ENCODE measurements at regions of chr21 and their contacts with region 1.

Region 1: GRCh38 chr21:39518138-39518846 is 66.5 kb downstream of the SH3BGR start:
- DNase-seq: no peak
- H3K4me3 ChIP-seq: no peak overlapping the region
- CTCF ChIP-seq: peak; percentile 72

Region 2: GRCh38 chr21:39349211-39350093 is 168.8 kb before region 1 on chr21:
- CTCF ChIA-PET with region 1: no interaction called
- POLR2A ChIA-PET with region 1: no interaction called
- DNase-seq: no peak
- H3K4me3 ChIP-seq: peak overlapping the region; percentile 60
- CTCF ChIP-seq: no peak

Region 3: GRCh38 chr21:39503123-39503762 is 15.0 kb before region 1 on chr21:
- CTCF ChIA-PET with region 1: interaction called, 20 read pairs
- POLR2A ChIA-PET with region 1: no interaction called
- DNase-seq: no peak
- H3K4me3 ChIP-seq: no peak overlapping the region
- CTCF ChIP-seq: no peak

Region 4: DNA sequence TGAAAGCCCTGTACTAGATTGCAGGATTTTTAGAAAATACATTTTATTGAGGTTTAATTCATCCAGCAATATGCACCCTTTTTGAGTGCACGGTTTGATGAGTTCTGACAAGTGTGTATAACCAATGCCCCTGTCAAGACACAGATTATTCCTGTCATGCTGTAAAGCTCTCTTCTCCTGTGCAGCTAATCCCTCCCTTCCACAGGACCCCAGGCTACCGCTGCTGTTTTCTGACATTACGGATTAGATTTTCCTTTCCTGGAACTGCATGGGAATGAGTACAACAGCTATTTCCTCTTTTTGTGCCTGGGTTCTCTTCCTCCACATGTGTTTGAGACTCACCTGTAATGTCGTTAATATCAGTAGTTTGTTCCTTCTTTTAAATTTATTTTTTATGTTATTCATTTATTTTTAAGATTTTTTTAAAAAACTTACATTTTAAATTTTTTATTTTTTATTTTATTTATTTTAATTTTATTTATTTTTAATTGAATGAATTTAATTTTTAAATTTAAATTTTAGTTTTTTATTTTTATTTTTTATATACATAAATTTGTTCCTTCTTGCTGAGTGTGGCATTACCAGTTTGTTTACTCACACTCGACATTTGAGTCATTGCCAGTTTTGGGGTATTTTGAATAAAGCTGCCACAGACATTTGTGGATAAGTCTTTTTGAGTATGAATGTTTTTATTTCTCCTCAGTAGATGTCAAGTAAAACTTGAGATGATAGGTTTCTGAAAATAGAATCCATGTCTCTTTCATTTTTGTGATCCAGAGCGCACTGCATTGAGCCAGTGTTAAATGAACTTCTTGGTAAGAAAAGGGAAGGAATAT is 15.5 kb after region 1 on chr21:
- CTCF ChIA-PET with region 1: interaction called, 15 read pairs
- POLR2A ChIA-PET with region 1: no interaction called
- DNase-seq: no peak
- H3K4me3 ChIP-seq: no peak overlapping the region
- CTCF ChIP-seq: no peak

Region 5: GRCh38 chr21:39690448-39690847 is 172.2 kb after region 1 on chr21:
- CTCF ChIA-PET with region 1: interaction called, 10 read pairs
- POLR2A ChIA-PET with region 1: no interaction called
- DNase-seq: no peak
- H3K4me3 ChIP-seq: no peak overlapping the region
- CTCF ChIP-seq: no peak

Region 6: DNA sequence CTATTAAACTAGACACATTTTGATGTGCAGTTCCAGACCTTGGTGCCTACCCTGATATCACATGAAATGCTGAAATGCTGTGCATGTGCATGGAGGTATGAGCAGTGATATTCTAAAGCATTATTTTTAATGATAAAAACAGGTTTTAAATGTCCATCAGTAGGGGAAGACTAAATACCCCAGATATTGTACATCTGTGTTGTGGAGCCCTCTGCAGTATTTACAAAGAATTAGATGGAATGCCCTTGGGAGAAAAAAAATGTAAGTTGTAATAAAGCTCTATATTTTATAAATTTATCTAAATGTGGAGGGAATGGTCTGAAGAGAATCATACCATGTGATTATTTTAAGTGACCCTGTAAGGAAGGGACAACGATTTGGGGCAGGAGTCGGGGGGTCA is 187.6 kb after region 1 on chr21:
- CTCF ChIA-PET with region 1: interaction called, 482 read pairs
- POLR2A ChIA-PET with region 1: no interaction called
- DNase-seq: no peak
- H3K4me3 ChIP-seq: no peak overlapping the region
- CTCF ChIP-seq: no peak

Region 7: DNA sequence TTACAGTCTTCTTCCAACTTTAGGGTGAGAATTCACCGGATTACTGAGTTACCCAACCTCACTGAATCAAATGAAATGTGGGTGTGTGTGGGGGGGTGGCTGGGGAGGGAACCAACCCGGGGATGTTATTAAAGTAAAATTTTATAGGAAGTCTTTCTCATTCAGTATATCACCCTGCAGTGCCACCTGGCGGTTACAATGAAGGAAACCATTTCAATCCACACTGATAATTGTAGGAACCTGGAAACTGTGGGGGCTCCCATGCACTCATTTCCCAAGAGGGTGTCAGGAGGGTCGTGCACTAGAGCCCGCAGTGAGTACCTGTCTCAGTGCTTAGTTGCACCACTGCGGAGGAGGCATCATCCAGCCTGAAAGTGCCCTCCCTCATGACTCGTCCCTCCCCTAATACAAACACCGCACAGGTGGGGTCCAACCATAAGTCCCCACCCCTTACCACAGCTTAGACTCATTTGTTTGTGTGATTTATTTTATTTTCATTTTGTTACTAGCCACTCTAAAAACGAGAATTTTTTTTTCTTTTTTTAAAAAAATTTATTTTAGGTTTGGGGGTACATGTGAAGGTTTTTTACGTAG is 197.6 kb after region 1 on chr21:
- CTCF ChIA-PET with region 1: interaction called, 482 read pairs
- POLR2A ChIA-PET with region 1: no interaction called
- DNase-seq: no peak
- H3K4me3 ChIP-seq: no peak overlapping the region
- CTCF ChIP-seq: peak; percentile 53

Region 8: DNA sequence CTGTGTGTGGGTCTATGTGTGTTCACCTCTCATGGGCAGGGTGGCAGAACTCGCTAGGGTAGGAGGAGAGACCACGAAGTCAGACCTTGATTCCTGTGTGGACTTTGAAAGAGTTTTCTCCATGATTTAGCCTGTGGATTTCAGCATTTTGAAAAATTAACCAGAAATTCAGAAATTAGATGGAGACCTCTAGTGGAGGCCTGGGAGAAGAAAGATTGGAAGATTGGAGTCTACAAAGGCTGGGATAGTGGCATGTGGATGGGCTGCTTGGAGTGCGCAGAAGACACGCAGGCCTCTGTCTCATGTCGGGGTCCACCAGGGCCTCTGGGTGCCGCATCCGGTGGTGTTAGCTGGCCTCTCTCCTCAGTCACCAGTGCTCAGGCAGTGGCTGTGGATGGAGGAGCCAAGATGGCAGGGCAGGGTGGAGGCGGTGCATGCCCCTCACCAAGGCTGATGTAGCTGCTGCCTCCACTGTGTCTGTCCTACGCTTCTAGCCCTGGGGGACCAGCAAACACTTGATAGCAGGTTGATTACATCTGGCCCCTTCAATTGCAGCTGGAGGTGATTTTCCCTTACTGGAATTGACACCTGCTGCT is 207.9 kb after region 1 on chr21:
- CTCF ChIA-PET with region 1: interaction called, 72 read pairs
- POLR2A ChIA-PET with region 1: no interaction called
- DNase-seq: no peak
- H3K4me3 ChIP-seq: no peak overlapping the region
- CTCF ChIP-seq: no peak